ENCODE measurements at regions of chr5 and their contacts with region 1.

Region 1: DNA sequence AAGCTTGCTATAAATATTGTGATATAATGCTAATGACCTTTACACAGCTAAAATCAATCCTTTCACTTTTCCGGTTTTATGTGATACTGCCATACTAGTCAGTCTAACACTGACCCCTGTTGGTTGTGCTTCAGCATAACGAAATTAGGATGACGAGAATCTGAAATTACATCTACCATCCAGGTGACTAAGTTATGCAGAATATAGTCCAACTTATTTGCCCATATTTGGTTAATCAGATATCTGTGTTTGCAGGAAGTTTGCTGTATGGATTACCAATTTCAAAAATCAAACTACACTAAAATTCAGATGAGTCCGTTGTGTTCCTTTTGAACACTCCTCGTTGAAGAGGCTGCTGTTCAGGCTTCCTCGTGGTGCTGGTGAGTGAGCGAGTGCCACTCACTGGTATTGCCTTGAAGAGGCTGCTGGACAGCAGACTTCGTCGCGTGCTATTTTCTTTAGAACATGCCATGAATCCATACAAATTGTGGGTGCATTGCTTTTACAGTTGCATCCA is 32.5 kb downstream of the TENT4A start:
- DNase-seq: peak; percentile 67
- ATAC-seq: peak; percentile 67
- H3K4me3 ChIP-seq: no peak overlapping the region
- H3K4me3 Mint-ChIP-seq: no peak overlapping the region
- H3K27ac ChIP-seq: no peak overlapping the region
- H3K27ac Mint-ChIP-seq: peak overlapping the region; percentile 46
- H3K4me1 ChIP-seq: no peaks in the 10 kb centered on the region
- H3K4me1 Mint-ChIP-seq: peaks cover 6% of the 10 kb centered on the region
- H3K27me3 ChIP-seq: no peaks in the 10 kb centered on the region
- H3K27me3 Mint-ChIP-seq: no peaks in the 10 kb centered on the region
- CTCF ChIP-seq: peak; percentile 89

Region 2: DNA sequence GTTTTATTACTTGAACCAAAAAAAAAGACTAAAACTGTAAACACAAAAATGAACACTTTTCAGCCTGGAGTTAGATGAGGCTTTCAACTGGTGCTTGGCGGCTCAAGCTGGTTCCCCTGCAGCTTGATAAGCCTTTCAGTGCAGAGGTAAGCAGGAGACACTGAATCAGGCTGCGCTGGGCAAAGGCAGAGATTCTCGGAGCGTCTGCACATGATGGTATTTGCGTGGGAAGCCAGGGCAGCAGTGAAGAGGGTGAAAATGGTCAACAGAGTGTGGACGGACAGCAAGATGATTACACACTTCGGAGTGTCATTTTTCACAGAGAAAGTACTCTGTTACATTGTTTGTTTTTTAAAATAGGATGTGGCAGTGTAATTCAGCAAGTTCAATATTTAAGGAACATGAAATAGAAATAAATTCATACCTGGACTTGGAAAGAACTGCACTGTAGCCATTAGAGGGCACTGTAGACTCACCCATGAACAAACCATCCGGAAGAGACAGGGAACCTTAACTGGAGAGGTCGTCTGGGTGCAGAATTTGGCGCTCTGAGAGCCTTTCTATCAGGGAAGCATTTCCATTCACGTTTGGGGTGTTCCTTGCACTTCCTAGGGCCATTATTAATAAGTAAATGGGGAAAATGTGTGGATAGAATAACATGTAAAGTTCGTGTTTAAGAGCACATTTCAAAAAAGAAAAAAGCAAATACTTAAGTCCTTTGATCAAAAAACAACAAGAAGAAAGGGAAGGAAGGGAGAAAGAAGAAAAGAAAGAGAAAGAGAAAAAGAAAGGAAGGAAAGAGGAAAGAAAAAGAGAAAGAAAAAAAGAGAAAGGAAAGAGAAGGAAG is 1253.5 kb before region 1 on chr5:
- CTCF ChIA-PET with region 1: interaction called, 4 read pairs
- POLR2A ChIA-PET with region 1: no interaction called
- intact Hi-C with region 1: loop called (anchors 1 kb)
- DNase-seq: peak; percentile 74
- ATAC-seq: peak; percentile 22
- H3K4me3 ChIP-seq: no peak overlapping the region
- H3K4me3 Mint-ChIP-seq: peak overlapping the region; percentile 69
- H3K27ac ChIP-seq: no peak overlapping the region
- H3K27ac Mint-ChIP-seq: peak overlapping the region; percentile 32
- H3K4me1 ChIP-seq: peaks cover 11 to 18% of the 10 kb centered on the region in 2 donors
- H3K4me1 Mint-ChIP-seq: peaks cover 23% of the 10 kb centered on the region
- H3K27me3 ChIP-seq: no peaks in the 10 kb centered on the region
- H3K27me3 Mint-ChIP-seq: no peaks in the 10 kb centered on the region
- CTCF ChIP-seq: peak; percentile 87

Region 3: DNA sequence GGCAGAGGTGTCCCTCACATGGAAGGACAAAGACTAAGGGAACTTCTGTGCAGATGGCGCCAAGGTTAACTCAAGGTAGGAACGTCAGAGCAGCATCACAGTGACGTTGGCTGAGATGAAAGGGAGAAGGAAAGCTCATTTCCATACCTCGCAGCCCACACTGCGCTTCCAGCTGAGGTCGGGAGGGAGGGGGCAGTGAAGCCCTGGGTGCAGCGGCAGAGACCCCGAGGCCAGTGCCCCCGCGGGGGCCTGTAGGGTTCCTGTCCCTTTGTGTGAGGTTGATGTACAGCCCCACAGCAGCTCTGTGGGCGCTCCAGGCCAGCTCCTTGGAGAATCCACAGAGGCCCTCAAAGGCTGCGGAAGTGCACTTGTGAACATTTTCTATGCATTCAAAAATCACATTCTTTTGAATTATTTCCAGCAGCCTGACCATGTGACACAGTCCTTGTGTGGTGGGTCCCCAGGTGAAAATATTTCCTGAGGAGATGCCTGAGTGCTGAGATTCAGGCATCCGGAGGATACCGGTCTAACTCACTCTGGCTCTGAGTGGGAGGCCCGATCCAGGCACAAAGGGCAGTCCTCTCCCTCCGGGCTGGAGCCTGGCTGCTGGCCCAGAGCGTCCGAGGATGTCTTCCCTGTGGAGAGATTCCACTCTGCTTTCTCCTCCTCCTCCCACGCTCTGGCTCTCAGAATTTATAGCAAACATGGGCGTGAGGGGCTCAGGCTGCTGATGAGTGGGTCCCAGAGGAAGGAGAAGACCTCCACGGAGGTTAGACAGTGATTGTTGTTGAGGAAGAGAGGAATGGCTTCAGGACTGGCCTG is 1172.6 kb before region 1 on chr5:
- CTCF ChIA-PET with region 1: no interaction called
- POLR2A ChIA-PET with region 1: no interaction called
- intact Hi-C with region 1: no loop called
- DNase-seq: no peak
- ATAC-seq: no peak
- H3K4me3 ChIP-seq: no peak overlapping the region
- H3K4me3 Mint-ChIP-seq: no peak overlapping the region
- H3K27ac ChIP-seq: no peak overlapping the region
- H3K27ac Mint-ChIP-seq: no peak overlapping the region
- H3K4me1 ChIP-seq: no peaks in the 10 kb centered on the region
- H3K4me1 Mint-ChIP-seq: no peaks in the 10 kb centered on the region
- H3K27me3 ChIP-seq: peaks cover 0 to 2% (median 0%) of the 10 kb centered on the region in 4 experiments
- H3K27me3 Mint-ChIP-seq: peaks cover 12% of the 10 kb centered on the region
- CTCF ChIP-seq: no peak

Region 4: DNA sequence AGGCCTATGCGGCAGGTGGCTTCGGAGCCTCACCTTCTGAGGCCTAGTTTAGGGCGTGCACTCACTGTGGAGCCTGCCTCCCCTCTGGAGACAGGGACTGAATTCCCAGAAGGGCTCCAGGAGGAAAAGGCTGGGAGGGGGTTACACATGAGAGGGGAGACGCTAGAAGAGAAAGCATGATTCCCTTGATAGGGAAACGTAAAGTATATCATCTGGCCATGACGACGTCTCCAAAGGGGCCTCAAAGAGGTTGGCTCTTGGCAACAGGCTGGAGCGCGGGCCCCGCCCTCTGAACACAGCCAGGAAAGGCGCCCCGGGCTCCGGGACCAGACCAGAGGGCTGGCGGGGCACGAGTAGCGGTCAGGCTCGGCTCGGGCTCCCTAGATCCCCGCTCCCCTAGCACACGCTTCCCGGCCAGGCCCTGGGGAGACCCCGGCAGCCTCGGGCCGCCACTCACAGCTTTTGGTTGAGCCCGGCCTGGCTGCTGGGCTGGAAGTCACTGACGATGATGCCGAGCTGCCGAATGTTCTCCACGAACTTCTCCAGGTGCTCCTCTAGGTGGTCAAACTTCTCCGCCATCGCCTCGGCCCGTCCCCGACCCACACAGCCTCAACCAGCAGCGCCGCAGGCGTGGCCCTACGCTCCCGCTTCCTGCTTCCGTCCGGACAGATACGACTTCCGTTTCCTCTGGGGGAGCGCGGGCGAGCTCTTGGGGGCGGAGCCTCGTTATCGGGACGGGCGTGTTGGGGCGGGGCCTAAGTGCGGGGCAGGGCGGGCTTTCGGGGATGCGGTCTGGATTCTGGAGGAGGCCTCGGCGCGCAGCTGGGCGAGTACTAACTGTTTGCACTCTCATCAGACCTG is 367.6 kb before region 1 on chr5 and contains the start of gene MED10:
- CTCF ChIA-PET with region 1: interaction called, 4 read pairs
- POLR2A ChIA-PET with region 1: no interaction called
- intact Hi-C with region 1: loop called (anchors 10 kb)
- DNase-seq: peak; percentile 94
- ATAC-seq: peak; percentile 99
- H3K4me3 ChIP-seq: peak within 1 kb of the TSS; percentile 68 to 97 (median 82)
- H3K4me3 Mint-ChIP-seq: peak within 1 kb of the TSS; percentile 95
- H3K27ac ChIP-seq: peak within 1 kb of the TSS; percentile 73 to 76
- H3K27ac Mint-ChIP-seq: peak within 1 kb of the TSS; percentile 95
- H3K4me1 ChIP-seq: peaks cover 16 to 21% of the 10 kb centered on the region in 2 donors
- H3K4me1 Mint-ChIP-seq: peaks cover 34% of the 10 kb centered on the region
- H3K27me3 ChIP-seq: no peaks in the 10 kb centered on the region
- H3K27me3 Mint-ChIP-seq: peaks cover 3% of the 10 kb centered on the region
- CTCF ChIP-seq: no peak
- total RNA-seq, gene MED10: 49.9 and 51.4 TPM in 2 replicates

Region 5: DNA sequence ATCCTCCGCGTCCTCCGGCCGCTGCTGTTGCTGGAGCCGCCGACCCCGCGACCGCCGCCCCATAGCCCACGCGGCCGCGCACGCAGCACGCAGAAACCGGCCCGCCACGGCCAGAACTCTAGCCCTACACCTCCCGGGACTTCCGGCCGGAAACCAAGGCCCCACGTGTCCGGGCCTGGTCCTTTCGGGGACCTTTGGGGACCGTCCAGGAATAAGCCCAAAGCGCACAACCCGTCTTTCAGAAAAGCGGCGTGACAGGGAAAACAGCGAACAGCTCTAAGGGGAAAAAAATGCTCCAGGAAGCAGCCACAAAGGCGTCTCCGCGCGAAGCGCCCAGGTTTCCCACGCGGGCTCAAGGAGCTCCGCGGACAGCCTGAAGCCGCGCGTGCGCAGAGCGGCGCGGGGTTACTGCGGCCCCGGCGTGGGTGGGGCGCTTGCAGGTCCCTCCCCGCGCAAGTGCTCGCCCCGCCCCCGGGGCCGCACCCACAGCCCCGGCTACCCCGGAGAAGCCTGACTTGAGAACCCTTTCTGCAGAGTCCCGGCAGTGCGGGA is 112.8 kb before region 1 on chr5 and contains the starts of genes NSUN2 and SRD5A1:
- CTCF ChIA-PET with region 1: interaction called, 19 read pairs
- POLR2A ChIA-PET with region 1: interaction called, 3 read pairs
- intact Hi-C with region 1: loop called (anchors 1 kb)
- DNase-seq: peak; percentile 97
- ATAC-seq: peak; percentile 89
- H3K4me3 ChIP-seq: peak within 1 kb of the TSS; percentile 74 to 91 (median 84)
- H3K4me3 Mint-ChIP-seq: peak within 1 kb of the TSS; percentile 95
- H3K27ac ChIP-seq: peak within 1 kb of the TSS; percentile 98 to 99
- H3K27ac Mint-ChIP-seq: peak within 1 kb of the TSS; percentile 99
- H3K4me1 ChIP-seq: peaks cover 16 to 28% of the 10 kb centered on the region in 2 donors
- H3K4me1 Mint-ChIP-seq: peaks cover 38% of the 10 kb centered on the region
- H3K27me3 ChIP-seq: no peaks in the 10 kb centered on the region
- H3K27me3 Mint-ChIP-seq: no peaks in the 10 kb centered on the region
- CTCF ChIP-seq: no peak
- total RNA-seq, gene NSUN2: 83.7 and 85.0 TPM in 2 replicates
- total RNA-seq, gene SRD5A1: 20.8 and 29.2 TPM in 2 replicates

Region 6: GRCh38 chr5:6722015-6722414 is 23.7 kb before region 1 on chr5:
- CTCF ChIA-PET with region 1: interaction called, 12 read pairs
- POLR2A ChIA-PET with region 1: no interaction called
- intact Hi-C with region 1: no loop called
- DNase-seq: no peak
- ATAC-seq: peak; percentile 59
- H3K4me3 ChIP-seq: peak overlapping the region in 4 of 5 experiments; percentile 7 to 52 (median 40)
- H3K4me3 Mint-ChIP-seq: peak overlapping the region; percentile 88
- H3K27ac ChIP-seq: peak overlapping the region; percentile 54 to 80
- H3K27ac Mint-ChIP-seq: peak overlapping the region; percentile 91
- H3K4me1 ChIP-seq: peaks cover 42 to 47% of the 10 kb centered on the region in 2 donors
- H3K4me1 Mint-ChIP-seq: peaks cover 88% of the 10 kb centered on the region
- H3K27me3 ChIP-seq: no peaks in the 10 kb centered on the region
- H3K27me3 Mint-ChIP-seq: no peaks in the 10 kb centered on the region
- CTCF ChIP-seq: no peak

Region 7: GRCh38 chr5:6804766-6805501 is 59.2 kb after region 1 on chr5:
- CTCF ChIA-PET with region 1: no interaction called
- POLR2A ChIA-PET with region 1: no interaction called
- intact Hi-C with region 1: no loop called
- DNase-seq: no peak
- ATAC-seq: no peak
- H3K4me3 ChIP-seq: no peak overlapping the region
- H3K4me3 Mint-ChIP-seq: no peak overlapping the region
- H3K27ac ChIP-seq: no peak overlapping the region
- H3K27ac Mint-ChIP-seq: no peak overlapping the region
- H3K4me1 ChIP-seq: no peaks in the 10 kb centered on the region
- H3K4me1 Mint-ChIP-seq: no peaks in the 10 kb centered on the region
- H3K27me3 ChIP-seq: no peaks in the 10 kb centered on the region
- H3K27me3 Mint-ChIP-seq: peaks cover 6% of the 10 kb centered on the region
- CTCF ChIP-seq: no peak